Common myeloid progenitor, CD34-positive (primary cell): ENCODE measurements at regions of chr22 and their contacts with region 1.

Region 1: DNA sequence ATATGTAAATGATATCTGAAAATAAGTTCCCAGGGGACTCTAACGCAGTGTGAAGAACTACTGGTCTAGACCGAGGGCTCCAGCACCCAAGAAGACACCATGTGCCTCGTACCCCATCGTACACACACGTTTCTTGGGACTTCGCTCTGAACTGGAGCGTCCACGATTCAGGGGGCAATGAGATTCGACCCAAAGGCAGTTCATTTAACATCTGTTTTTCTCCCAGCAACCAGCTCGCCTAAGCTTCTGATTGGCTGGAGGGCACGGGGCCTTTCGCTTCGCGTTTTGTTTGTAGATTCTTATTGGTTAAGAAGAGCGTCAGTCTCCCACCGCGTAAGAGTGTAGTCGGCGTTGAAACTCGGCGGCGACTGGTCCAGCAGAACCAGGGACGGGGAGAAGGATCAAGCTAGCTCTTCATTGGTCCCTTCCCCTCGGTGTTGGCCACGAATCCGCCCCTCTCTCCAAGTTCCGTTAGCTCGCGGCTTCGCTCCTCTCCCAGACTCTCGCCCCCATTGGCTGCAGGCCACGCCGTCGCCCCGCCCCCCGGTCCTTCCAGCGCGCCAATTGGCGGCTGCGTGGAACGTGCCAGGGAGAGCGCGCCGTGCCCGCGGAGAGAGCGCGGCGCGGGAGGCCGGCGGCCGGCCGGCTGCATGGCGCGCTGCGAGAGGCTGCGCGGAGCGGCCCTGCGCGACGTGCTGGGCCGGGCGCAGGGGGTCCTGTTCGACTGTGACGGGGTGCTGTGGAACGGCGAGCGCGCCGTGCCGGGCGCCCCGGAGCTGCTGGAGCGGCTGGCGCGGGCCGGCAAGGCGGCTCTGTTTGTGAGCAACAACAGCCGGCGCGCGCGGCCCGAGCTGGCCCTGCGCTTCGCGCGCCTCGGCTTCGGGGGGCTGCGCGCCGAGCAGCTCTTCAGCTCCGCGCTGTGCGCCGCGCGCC is at the start of gene PDXP:
- DNase-seq: peak; percentile 100
- H3K4me3 ChIP-seq: peak within 1 kb of the TSS; percentile 37 to 85 (median 70)
- H3K27ac ChIP-seq: peak within 1 kb of the TSS; percentile 13 to 79
- H3K4me1 ChIP-seq: peaks cover 13 to 38% (median 37%) of the 10 kb centered on the region in 4 experiments
- H3K27me3 ChIP-seq: no peaks in the 10 kb centered on the region

Region 2: DNA sequence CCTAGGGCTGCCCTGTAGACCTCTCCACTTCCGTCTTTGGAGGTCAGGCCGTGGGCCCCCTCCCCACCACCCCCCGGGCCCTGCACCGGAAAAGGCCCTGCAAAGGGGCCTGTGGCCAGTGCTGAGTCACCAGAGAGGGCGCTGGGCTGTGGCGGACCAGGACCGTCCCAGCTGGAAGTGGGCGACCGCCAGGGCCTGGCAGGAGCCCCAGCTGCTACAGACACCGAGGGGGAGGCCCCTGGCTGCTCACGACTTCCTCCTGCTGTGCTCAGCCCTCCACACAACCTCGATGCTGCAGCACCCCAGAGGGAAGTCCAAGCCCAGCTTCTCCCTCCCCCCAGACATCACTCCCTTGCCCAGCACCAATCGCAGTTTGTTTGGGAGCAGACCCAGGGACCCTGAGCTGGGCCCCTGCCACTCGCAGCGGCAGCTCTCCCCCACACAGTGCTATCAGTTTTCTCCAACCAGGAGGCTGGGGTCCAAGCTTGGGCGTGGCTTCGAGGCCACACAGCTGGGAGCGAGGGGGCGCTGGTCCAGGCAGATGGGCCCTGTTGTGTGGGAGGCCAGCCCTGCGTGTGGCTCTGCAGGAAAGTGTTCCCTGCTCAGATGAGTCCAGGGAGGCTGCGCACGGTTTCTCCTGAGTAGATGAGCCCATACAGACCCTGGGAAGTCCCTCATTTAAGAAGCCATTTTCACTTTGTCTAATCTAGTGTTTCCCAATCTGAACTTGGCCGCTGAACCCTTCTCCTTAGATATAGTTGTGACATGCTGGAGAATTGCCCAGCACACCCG is 24.6 kb before region 1 on chr22:
- CTCF ChIA-PET with region 1: interaction called, 672 read pairs
- POLR2A ChIA-PET with region 1: interaction called, 4 read pairs
- DNase-seq: peak; percentile 73 to 93 (median 91)
- H3K4me3 ChIP-seq: peak overlapping the region in 5 of 7 experiments; percentile 17 to 56 (median 45)
- H3K27ac ChIP-seq: peak overlapping the region in 1 of 2 experiments; percentile 86
- H3K4me1 ChIP-seq: peaks cover 3 to 92% (median 77%) of the 10 kb centered on the region in 4 experiments
- H3K27me3 ChIP-seq: no peaks in the 10 kb centered on the region

Region 3: GRCh38 chr22:37686002-37686982 is 27.9 kb after region 1 on chr22 and contains the start of gene NOL12:
- CTCF ChIA-PET with region 1: interaction called, 494 read pairs
- POLR2A ChIA-PET with region 1: interaction called, 7 read pairs
- DNase-seq: peak; percentile 88 to 91 (median 89)
- H3K4me3 ChIP-seq: peak within 1 kb of the TSS; percentile 81 to 98 (median 96)
- H3K27ac ChIP-seq: peak within 1 kb of the TSS; percentile 79 to 91
- H3K4me1 ChIP-seq: peaks cover 0 to 22% (median 20%) of the 10 kb centered on the region in 4 experiments
- H3K27me3 ChIP-seq: no peaks in the 10 kb centered on the region

Region 4: GRCh38 chr22:37696657-37697537 is 38.5 kb after region 1 on chr22 and contains the start of gene TRIOBP:
- CTCF ChIA-PET with region 1: interaction called, 18 read pairs
- POLR2A ChIA-PET with region 1: interaction called, 4 read pairs
- DNase-seq: peak; percentile 95 to 98 (median 98)
- H3K4me3 ChIP-seq: peak within 1 kb of the TSS in 5 of 7 experiments; percentile 23 to 59 (median 36)
- H3K27ac ChIP-seq: no peak within 1 kb of the TSS
- H3K4me1 ChIP-seq: peaks cover 0 to 22% (median 7%) of the 10 kb centered on the region in 4 experiments
- H3K27me3 ChIP-seq: no peaks in the 10 kb centered on the region

Region 5: GRCh38 chr22:37711490-37711889 is 53.1 kb after region 1 on chr22:
- CTCF ChIA-PET with region 1: no interaction called
- POLR2A ChIA-PET with region 1: no interaction called
- DNase-seq: no peak
- H3K4me3 ChIP-seq: no peak overlapping the region
- H3K27ac ChIP-seq: no peak overlapping the region
- H3K4me1 ChIP-seq: peaks cover 0 to 5% (median 2%) of the 10 kb centered on the region in 4 experiments
- H3K27me3 ChIP-seq: no peaks in the 10 kb centered on the region

Region 6: DNA sequence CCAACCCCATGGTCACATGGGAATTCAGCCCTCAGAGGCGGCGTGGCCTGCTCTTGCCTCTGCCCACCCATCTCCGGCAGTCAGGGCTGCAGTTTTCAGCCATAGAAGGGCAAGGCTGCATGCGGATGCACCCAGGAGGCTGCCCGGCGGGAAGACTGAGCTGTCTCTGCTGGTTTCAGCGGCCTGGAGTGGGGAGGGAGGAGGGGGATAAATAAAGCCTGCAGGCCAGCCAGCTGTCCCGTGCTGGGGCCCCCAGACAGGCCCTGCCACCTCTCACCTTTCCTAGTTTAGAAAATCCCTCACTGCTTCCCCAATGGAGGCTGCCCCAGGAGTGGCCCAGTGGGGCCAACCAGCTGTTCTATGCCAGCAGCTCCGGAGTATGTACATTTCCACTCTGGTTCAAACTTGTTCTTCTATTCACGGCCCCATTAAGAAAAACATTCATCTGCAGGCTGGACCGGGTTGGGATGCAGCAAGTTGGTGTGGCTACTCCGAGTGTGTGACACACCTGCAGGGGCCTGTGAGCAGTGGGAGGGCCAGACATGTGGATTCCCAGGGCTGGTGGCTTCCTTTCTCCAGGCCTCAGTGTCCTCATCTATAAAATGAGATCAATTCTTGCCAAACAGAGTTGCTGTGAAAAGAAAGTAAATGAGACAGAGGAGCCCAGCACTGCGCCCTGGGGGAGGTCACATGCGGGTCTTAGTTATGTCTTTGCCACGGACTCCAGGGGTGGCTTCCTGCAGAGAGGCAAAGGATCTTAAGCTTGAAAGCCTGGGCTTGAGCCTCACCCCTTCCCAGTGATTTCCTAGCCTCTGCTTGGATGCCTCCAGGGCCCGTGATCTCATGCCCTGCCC is 252.7 kb after region 1 on chr22:
- CTCF ChIA-PET with region 1: no interaction called
- POLR2A ChIA-PET with region 1: no interaction called
- DNase-seq: no peak
- H3K4me3 ChIP-seq: no peak overlapping the region
- H3K27ac ChIP-seq: no peak overlapping the region
- H3K4me1 ChIP-seq: peaks cover 0 to 13% (median 12%) of the 10 kb centered on the region in 4 experiments
- H3K27me3 ChIP-seq: no peaks in the 10 kb centered on the region